Caco-2 (cell line): ENCODE measurements at regions of chr20 and their contacts with region 1.

Region 1: GRCh38 chr20:45812157-45813020 is at the start of gene UBE2C:
- DNase-seq: peak; percentile 100
- H3K4me3 ChIP-seq: peak within 1 kb of the TSS; percentile 91
- H3K4me3 Mint-ChIP-seq: peak within 1 kb of the TSS; percentile 95
- H3K27ac Mint-ChIP-seq: peak within 1 kb of the TSS; percentile 92
- H3K4me1 ChIP-seq: peaks cover 28% of the 10 kb centered on the region
- H3K4me1 Mint-ChIP-seq: peaks cover 20% of the 10 kb centered on the region
- H3K27me3 ChIP-seq: no peaks in the 10 kb centered on the region
- H3K27me3 Mint-ChIP-seq: no peaks in the 10 kb centered on the region
- CTCF ChIP-seq: no peak
- total RNA-seq, gene UBE2C: 409 and 423 TPM in 2 replicates

Region 2: DNA sequence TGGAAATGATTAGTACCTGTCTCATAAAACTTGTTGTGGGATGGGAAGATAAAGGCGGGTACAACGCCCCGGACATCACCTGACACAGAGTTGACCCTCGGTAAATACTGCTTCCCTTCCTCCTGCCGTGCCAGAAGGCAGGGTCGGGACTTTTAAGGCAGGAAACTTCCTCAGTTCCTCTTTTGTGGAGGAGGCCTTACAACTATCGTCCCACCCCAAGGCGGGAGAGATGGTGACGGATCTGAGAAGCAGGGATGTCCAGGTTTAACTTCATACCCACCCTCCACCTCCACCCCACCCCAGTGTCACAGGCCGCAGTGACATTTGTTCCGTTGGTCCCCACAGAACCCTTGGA is 20.1 kb before region 1 on chr20:
- CTCF ChIA-PET with region 1: no interaction called
- POLR2A ChIA-PET with region 1: interaction called, 4 read pairs
- intact Hi-C with region 1: loop called (anchors 1 kb)
- DNase-seq: no peak
- H3K4me3 ChIP-seq: peak overlapping the region; percentile 81
- H3K4me3 Mint-ChIP-seq: peak overlapping the region; percentile 76
- H3K27ac Mint-ChIP-seq: peak overlapping the region; percentile 87
- H3K4me1 ChIP-seq: peaks cover 5% of the 10 kb centered on the region
- H3K4me1 Mint-ChIP-seq: peaks cover 12% of the 10 kb centered on the region
- H3K27me3 ChIP-seq: no peaks in the 10 kb centered on the region
- H3K27me3 Mint-ChIP-seq: no peaks in the 10 kb centered on the region
- CTCF ChIP-seq: no peak

Region 3: GRCh38 chr20:45798935-45799642 is 13.3 kb before region 1 on chr20:
- CTCF ChIA-PET with region 1: no interaction called
- POLR2A ChIA-PET with region 1: no interaction called
- intact Hi-C with region 1: loop called (anchors 1 kb)
- DNase-seq: peak; percentile 81 to 89
- H3K4me3 ChIP-seq: no peak overlapping the region
- H3K4me3 Mint-ChIP-seq: no peak overlapping the region
- H3K27ac Mint-ChIP-seq: no peak overlapping the region
- H3K4me1 ChIP-seq: no peaks in the 10 kb centered on the region
- H3K4me1 Mint-ChIP-seq: no peaks in the 10 kb centered on the region
- H3K27me3 ChIP-seq: no peaks in the 10 kb centered on the region
- H3K27me3 Mint-ChIP-seq: no peaks in the 10 kb centered on the region
- CTCF ChIP-seq: peak; percentile 94 to 96

Region 4: DNA sequence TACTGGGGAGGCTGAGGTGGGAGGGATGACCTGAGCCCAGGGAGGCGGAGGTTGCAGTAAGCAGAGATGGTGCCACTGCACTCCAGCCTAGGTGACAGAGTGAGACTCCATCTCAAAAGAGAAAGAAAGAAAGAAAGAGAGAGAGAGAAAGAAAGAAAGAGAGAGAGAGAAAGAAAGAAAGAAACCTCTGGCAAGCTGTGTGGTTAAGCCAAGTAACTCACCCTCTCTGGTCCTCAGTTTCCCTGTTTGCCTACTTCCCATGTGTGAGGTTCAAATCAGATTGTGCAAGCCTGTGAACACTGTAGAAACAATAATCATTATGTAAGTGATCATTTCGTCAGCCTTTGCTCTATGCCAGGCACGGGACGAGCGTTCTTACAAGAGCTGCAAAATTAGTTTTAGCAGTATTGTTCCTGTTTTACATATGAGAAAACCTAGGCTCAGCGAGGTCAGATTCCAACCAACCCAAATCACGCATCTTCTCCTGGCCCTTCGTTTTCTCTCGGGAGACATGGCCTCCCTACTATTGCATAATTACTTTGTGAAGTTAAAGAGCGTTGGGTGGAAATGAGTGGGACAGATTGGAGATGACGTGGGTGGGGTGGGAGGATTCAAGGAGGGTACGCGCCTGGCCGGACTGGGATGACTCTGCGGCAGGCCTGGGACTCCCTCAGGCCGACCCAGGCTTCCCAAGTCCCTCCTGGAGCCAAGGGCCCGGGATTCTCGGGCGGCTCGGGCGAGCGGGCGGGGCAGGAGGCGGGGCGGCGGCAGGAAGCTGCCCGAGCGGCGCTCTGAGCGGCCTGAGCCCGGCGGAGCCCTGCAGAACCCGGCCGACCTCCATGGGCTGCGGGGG is 20.9 kb after region 1 on chr20 and contains the start of gene SNX21:
- CTCF ChIA-PET with region 1: no interaction called
- POLR2A ChIA-PET with region 1: interaction called, 6 read pairs
- intact Hi-C with region 1: loop called (anchors 1 kb)
- DNase-seq: peak; percentile 94 to 95
- H3K4me3 ChIP-seq: peak within 1 kb of the TSS; percentile 86
- H3K4me3 Mint-ChIP-seq: peak within 1 kb of the TSS; percentile 71
- H3K27ac Mint-ChIP-seq: peak within 1 kb of the TSS; percentile 53
- H3K4me1 ChIP-seq: peaks cover 13% of the 10 kb centered on the region
- H3K4me1 Mint-ChIP-seq: peaks cover 15% of the 10 kb centered on the region
- H3K27me3 ChIP-seq: no peaks in the 10 kb centered on the region
- H3K27me3 Mint-ChIP-seq: no peaks in the 10 kb centered on the region
- CTCF ChIP-seq: no peak
- total RNA-seq, gene SNX21: 14.1 and 15.6 TPM in 2 replicates

Region 5: GRCh38 chr20:45857114-45857881 is 44.9 kb after region 1 on chr20 and contains the starts of genes ACOT8 and ZSWIM3:
- CTCF ChIA-PET with region 1: no interaction called
- POLR2A ChIA-PET with region 1: interaction called, 3 read pairs
- intact Hi-C with region 1: loop called (anchors 1 kb)
- DNase-seq: peak; percentile 100
- H3K4me3 ChIP-seq: peak within 1 kb of the TSS; percentile 65
- H3K4me3 Mint-ChIP-seq: peak within 1 kb of the TSS; percentile 95
- H3K27ac Mint-ChIP-seq: peak within 1 kb of the TSS; percentile 85
- H3K4me1 ChIP-seq: peaks cover 17% of the 10 kb centered on the region
- H3K4me1 Mint-ChIP-seq: peaks cover 19% of the 10 kb centered on the region
- H3K27me3 ChIP-seq: no peaks in the 10 kb centered on the region
- H3K27me3 Mint-ChIP-seq: no peaks in the 10 kb centered on the region
- CTCF ChIP-seq: no peak
- total RNA-seq, gene ACOT8: 35.1 and 36.2 TPM in 2 replicates
- total RNA-seq, gene ZSWIM3: 6.1 and 6.4 TPM in 2 replicates

Region 6: DNA sequence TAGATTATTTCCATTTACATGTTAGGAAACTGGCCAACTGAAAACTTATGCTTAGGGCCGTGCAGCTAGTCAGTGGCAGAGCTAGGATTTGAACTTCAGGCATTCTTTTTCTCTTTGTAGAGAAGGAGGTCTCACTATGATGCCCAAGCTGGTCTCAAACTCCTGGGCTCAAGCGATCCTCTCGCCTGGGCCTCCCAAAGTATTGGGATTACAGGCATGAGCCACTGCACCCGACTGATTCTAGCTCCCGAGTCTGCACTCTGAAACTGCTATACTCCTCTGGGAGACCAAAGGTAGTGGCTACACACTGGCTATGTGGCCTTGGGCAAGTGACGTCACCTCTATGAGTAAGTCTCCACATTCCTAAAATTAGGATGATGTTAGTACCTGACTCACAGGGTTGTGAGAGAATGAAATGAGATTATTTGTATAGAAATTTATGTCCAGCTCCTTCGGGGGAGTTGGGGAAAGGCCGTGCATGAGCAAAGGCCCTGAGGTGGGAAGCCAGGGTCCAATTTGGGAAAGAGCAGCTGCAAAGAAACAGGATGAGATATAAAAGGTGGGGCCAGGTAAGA is 93.2 kb after region 1 on chr20:
- CTCF ChIA-PET with region 1: no interaction called
- POLR2A ChIA-PET with region 1: no interaction called
- intact Hi-C with region 1: no loop called
- DNase-seq: no peak
- H3K4me3 ChIP-seq: no peak overlapping the region
- H3K4me3 Mint-ChIP-seq: no peak overlapping the region
- H3K27ac Mint-ChIP-seq: no peak overlapping the region
- H3K4me1 ChIP-seq: no peaks in the 10 kb centered on the region
- H3K4me1 Mint-ChIP-seq: peaks cover 9% of the 10 kb centered on the region
- H3K27me3 ChIP-seq: no peaks in the 10 kb centered on the region
- H3K27me3 Mint-ChIP-seq: no peaks in the 10 kb centered on the region
- CTCF ChIP-seq: no peak